ENCODE measurements at regions of chr19 and their contacts with region 1.

Region 1: DNA sequence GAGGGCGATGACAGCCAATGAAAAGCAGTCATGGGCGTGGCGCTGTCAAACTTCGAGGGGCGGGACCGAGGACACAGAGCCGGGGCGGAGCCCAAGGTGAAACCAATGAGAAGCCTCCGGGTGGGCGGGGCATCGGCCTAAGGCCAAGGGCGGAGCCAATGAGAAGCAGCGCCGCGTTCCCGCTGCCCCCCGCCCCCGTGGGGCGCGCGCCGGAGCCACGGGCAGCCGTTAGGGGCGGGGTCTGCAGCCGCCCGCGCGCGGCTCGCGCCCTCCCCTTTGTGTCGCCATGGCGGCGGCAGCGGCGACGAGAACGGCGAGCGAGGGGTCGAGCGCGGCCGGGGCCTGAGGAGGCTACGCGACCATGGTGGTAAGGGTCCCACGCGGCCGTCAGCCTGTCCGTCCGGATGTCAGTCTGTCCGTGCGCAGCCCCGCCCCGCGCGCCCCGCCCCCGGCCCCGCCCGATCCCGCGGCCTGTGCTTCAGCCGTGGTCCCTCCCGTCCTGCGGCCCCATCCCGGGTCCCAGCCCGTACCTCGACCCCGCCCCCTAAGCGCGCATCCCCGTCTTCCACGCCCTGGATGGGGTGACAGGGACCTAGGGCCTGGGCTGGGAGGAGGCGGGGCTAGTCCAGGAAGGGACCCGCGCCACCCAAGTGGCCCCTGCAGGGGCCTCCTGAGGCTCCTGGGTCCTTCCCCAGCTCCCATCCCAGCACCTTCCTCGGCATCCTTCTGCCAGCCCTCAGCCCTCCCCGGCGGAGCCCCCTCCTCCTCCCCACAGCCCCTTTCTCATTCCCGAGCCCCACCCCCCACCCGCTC is at the start of gene ARHGAP33:
- DNase-seq: peak; percentile 93
- H3K4me3 ChIP-seq: peak within 1 kb of the TSS; percentile 35 to 70 (median 68)
- H3K27ac ChIP-seq: no peak within 1 kb of the TSS
- H3K4me1 ChIP-seq: no peaks in the 10 kb centered on the region
- H3K27me3 ChIP-seq: no peaks in the 10 kb centered on the region
- CTCF ChIP-seq: no peak
- total RNA-seq, gene ARHGAP33: 0.33 to 11.6 TPM

Region 2: GRCh38 chr19:35736913-35737886 is 38.3 kb before region 1 on chr19:
- CTCF ChIA-PET with region 1: no interaction called
- dilution Hi-C with region 1: no loop called
- in situ Hi-C with region 1: no loop called
- intact Hi-C with region 1: no loop called
- DNase-seq: no peak
- H3K4me3 ChIP-seq: no peak overlapping the region
- H3K27ac ChIP-seq: no peak overlapping the region
- H3K4me1 ChIP-seq: peaks cover 9% of the 10 kb centered on the region
- H3K27me3 ChIP-seq: no peaks in the 10 kb centered on the region
- CTCF ChIP-seq: peak in 1 of 2 donors; percentile 12

Region 3: DNA sequence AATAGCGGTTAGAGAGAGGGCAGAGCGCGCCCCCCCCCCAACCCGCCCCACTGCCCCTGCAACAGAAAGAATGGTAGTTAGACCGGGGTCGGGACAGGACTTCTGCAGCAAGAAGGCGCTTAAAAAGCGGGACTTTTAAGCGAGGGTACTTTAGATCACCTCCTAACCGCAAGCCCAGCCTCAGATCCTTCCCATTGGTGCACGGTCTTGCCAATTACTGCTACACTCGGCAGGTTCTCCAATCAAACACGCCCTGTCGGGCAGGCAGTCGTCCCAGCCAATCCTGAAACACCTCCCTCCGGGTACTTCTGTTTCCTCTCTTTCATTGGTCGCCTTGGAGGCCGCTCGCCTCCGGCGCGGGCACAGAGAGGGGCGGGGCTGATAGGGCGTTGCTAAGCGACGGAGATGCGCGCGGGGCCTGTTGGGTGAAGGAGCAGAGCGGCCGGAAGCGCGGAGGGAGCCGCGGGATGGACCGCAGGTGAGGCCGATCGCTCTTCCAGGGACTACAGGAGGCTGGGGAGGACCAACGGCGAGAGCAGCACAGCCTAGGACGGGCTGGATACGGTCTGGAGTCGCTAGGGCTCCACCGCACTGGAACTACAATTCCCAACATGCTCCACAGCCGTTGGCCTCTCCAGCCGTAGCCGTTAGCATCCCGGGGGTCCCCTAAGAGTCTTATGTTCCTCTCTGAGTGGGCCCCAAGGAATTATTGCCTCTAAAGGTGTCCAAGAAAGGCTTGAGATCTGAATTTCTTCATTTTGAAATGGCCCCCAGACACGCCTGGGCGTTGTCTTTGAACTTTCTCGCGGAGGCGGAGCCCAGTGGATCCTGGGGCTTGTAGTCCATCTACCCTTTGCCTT is 17.5 kb before region 1 on chr19 and contains the start of gene PROSER3:
- CTCF ChIA-PET with region 1: no interaction called
- dilution Hi-C with region 1: no loop called
- in situ Hi-C with region 1: no loop called
- intact Hi-C with region 1: loop called (anchors 1 kb)
- DNase-seq: peak; percentile 99
- H3K4me3 ChIP-seq: peak within 1 kb of the TSS; percentile 71 to 83 (median 76)
- H3K27ac ChIP-seq: peak within 1 kb of the TSS; percentile 91
- H3K4me1 ChIP-seq: peaks cover 19% of the 10 kb centered on the region
- H3K27me3 ChIP-seq: no peaks in the 10 kb centered on the region
- CTCF ChIP-seq: no peak
- total RNA-seq, gene PROSER3: 9.7 to 48.3 TPM